MCF 10A (cell line): ENCODE measurements at regions of chr10 and their contacts with region 1.

Region 1: DNA sequence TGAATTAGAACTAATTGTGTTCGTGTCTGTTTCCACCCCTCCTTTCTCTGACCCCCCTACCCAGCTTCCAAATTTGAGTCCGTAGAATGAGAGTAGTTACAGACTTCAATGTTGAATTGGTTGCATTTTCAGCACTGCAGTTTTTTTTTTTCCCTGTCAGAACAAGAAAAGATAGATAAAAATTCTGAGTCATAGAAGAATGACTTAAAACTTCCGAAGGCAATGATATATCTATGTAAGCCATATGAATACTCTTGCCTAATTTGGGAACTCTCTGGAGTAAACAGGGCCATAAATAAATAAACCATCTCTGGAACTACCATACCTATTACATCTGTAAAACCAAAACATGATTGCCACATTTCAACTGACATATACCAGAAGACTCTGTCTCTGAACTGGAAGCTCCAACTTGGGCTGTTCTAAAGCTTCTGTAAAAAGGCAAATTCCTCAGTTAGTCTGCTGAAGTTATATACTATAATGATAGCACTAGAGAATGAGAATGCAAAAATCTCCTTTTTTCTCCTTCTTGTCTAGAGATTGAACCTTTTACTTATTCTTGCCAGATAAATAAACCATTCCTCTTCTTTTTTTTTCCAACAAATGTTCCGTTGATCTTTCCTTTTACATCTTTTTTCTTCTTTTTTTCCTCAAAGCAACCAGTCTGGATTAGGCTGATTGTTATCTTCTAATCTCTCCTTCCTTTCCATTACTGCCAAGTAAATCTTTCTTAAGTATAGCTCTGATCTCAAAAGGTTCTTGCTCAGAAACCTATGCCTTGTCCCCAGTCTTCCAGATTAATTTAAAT is 23.5 kb downstream of the VCL start:
- DNase-seq: peak; percentile 79
- H3K4me3 Mint-ChIP-seq: peak overlapping the region; percentile 53
- H3K27ac Mint-ChIP-seq: peak overlapping the region; percentile 43
- H3K4me1 Mint-ChIP-seq: peaks cover 28% of the 10 kb centered on the region
- H3K27me3 Mint-ChIP-seq: no peaks in the 10 kb centered on the region
- CTCF ChIP-seq: no peak

Region 2: GRCh38 chr10:73837072-73837471 is 184.4 kb before region 1 on chr10:
- CTCF ChIA-PET with region 1: no interaction called
- POLR2A ChIA-PET with region 1: no interaction called
- intact Hi-C with region 1: no loop called
- DNase-seq: no peak
- H3K4me3 Mint-ChIP-seq: no peak overlapping the region
- H3K27ac Mint-ChIP-seq: peak overlapping the region; percentile 35
- H3K4me1 Mint-ChIP-seq: no peaks in the 10 kb centered on the region
- H3K27me3 Mint-ChIP-seq: no peaks in the 10 kb centered on the region
- CTCF ChIP-seq: no peak

Region 3: DNA sequence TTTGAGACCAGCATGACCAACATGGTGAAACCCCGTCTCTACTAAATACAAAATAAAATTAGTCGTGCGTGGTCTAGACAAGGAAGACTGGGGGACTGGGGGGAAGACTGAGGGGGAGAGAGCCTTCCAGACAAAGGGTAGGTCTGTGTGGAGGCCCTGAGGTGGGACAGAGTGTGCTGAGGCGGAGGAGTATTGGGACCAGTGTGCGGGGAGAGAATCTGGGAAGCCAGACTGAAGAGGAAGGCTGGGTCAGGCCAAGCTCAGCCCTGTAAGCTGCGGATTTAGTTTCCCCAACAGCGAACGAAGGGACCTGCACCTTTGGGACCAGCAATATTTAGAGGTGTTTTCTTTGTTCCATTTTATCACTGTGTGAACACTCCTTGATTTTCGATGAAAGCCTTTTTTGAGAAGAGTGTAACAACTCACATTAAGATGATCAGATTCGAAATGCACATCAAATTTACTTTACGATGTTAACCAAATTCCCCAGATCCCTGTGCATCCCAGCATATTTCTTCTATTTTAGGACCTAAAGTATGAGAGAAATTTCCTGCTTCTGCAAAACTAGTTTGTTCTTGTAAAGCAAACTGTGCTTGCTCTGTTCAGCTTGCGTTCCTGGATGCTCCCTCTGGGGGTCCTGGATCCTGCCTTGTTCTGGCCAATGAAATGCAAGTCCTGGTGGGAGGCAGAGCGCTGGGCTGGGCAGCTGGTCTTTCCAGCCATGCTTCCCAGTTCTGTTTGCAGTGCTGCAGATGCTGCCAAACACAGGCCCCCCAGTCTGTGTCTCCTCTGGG is 71.1 kb before region 1 on chr10:
- CTCF ChIA-PET with region 1: no interaction called
- POLR2A ChIA-PET with region 1: no interaction called
- intact Hi-C with region 1: no loop called
- DNase-seq: no peak
- H3K4me3 Mint-ChIP-seq: no peak overlapping the region
- H3K27ac Mint-ChIP-seq: no peak overlapping the region
- H3K4me1 Mint-ChIP-seq: no peaks in the 10 kb centered on the region
- H3K27me3 Mint-ChIP-seq: no peaks in the 10 kb centered on the region
- CTCF ChIP-seq: no peak

Region 4: GRCh38 chr10:74008212-74008731 is 13.2 kb before region 1 on chr10:
- CTCF ChIA-PET with region 1: interaction called, 9 read pairs
- POLR2A ChIA-PET with region 1: interaction called, 28 read pairs
- intact Hi-C with region 1: no loop called
- DNase-seq: no peak
- H3K4me3 Mint-ChIP-seq: no peak overlapping the region
- H3K27ac Mint-ChIP-seq: peak overlapping the region; percentile 31
- H3K4me1 Mint-ChIP-seq: peaks cover 26% of the 10 kb centered on the region
- H3K27me3 Mint-ChIP-seq: no peaks in the 10 kb centered on the region
- CTCF ChIP-seq: no peak

Region 5: DNA sequence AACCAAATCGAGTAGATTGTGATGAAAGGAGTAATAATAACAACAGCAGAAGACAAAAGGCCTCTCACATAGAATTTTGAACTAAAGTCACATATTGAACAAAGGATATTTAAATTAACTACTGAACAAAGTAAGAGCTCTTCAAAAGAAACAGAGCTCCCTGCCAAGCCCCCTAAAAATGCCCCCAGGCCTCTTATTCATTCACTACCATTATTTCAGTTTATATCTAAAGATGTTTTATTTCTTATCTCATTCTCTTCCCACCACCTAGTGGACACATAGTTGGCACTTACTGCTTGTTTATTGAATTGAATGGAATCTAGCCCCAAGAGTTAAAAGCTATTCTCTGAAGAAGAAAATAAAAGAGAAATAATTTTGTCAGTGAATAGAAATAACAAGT is 13.9 kb after region 1 on chr10:
- CTCF ChIA-PET with region 1: interaction called, 5 read pairs
- POLR2A ChIA-PET with region 1: interaction called, 21 read pairs
- intact Hi-C with region 1: no loop called
- DNase-seq: no peak
- H3K4me3 Mint-ChIP-seq: no peak overlapping the region
- H3K27ac Mint-ChIP-seq: peak overlapping the region; percentile 0
- H3K4me1 Mint-ChIP-seq: peaks cover 38% of the 10 kb centered on the region
- H3K27me3 Mint-ChIP-seq: no peaks in the 10 kb centered on the region
- CTCF ChIP-seq: peak; percentile 11